ENCODE measurements at regions of chr7 and their contacts with region 1.

Region 1: DNA sequence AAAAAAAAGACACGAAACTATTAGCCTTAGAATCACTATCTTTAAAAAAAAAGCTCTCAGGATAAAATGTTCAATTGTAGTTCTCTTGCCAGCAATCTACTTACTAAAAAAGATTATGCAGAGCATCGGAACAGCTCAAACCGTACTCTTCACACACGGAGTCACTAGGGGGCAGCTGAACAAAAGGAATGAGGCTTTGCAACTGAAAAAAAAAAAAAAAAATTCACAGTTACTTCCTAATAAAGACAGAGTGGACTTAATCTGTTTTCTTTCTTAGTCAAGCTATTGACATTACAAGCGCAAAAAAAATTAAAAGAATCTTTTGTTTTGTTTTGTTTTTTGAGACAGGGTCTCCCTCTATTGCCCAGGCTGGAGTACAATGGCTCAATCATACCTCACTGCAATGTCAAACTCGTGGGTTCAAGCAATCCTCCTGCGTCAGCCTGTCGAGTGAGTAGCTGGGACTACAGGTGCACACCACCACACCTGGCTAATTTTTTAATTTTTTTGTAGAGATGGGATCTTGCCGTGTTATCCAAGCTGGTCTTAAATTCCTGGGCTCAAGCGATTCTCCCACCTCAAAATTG is 11.5 kb downstream of the PMS2 start:
- DNase-seq: peak; percentile 62
- H3K4me3 Mint-ChIP-seq: no peak overlapping the region
- H3K27ac Mint-ChIP-seq: no peak overlapping the region
- H3K4me1 Mint-ChIP-seq: peaks cover 11% of the 10 kb centered on the region
- H3K27me3 Mint-ChIP-seq: no peaks in the 10 kb centered on the region
- CTCF ChIP-seq: peak; percentile 51

Region 2: DNA sequence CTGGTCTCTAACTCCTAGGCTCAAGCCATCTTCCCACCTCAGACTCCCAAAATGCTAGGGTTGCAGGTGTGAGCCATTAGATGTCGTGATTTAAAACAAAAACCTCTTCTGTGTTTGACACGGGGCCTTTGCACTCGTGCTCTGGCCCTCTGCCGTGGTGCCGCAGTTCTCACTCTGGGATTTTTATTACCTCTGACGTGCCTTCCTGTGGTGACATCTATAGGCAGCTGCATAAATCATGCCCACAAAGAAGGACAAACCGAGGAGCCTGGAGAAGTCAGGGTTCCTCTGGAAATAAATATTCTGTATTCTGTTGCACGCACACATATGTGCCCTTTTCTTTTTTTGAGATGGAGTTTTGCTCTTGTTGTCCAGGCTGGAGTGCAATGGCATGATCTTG is 142.6 kb before region 1 on chr7:
- CTCF ChIA-PET with region 1: interaction called, 4 read pairs
- POLR2A ChIA-PET with region 1: interaction called, 4 read pairs
- intact Hi-C with region 1: loop called (anchors 10 kb)
- DNase-seq: no peak
- H3K4me3 Mint-ChIP-seq: no peak overlapping the region
- H3K27ac Mint-ChIP-seq: no peak overlapping the region
- H3K4me1 Mint-ChIP-seq: no peaks in the 10 kb centered on the region
- H3K27me3 Mint-ChIP-seq: no peaks in the 10 kb centered on the region
- CTCF ChIP-seq: no peak

Region 3: DNA sequence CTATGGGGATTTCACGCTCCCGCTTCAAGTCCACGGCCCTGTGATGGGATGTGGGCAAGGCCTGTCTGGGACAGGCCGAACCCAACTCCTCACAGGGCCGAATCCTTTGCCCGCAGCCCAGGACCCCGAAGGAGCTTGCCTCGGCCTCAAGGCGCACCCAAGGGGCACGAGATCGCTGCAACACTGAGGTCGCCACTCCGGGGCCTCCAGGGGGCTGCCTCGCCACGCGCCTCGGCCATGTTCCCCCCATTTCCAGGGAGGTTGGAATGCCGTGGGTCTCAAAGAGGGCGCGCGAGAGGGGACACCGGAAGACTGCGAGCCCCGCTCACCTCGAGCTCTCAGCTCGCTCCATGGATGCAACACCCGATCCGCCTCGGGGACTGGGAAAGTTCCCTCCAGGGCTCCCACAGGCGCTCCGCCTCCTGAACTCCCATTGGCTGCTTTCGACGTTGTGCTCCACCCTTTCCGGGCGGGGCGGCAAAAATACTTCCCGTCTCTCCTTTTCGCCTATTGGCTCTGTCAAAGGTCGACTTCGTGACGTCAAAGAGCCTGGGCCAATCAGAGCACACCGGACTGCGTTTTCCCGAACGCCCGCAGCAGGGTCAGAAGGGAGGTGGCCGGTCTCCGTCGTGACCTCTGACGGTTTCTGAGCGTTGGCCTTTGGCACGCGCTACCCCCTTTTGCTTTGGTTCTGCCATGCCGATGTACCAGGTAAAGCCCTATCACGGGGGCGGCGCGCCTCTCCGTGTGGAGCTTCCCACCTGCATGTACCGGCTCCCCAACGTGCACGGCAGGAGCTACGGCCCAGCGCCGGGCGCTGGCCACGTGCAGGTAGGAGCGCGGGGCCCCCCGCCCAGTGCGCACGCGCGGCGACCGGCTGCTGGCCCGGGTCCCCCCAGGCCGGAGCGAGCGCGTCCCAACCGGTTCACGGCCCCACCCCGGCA is 11.6 kb after region 1 on chr7 and contains the starts of genes AIMP2 and PMS2:
- CTCF ChIA-PET with region 1: interaction called, 9 read pairs
- POLR2A ChIA-PET with region 1: interaction called, 38 read pairs
- intact Hi-C with region 1: no loop called
- DNase-seq: peak; percentile 99
- H3K4me3 Mint-ChIP-seq: peak within 1 kb of the TSS; percentile 83
- H3K27ac Mint-ChIP-seq: peak within 1 kb of the TSS; percentile 88
- H3K4me1 Mint-ChIP-seq: peaks cover 33% of the 10 kb centered on the region
- H3K27me3 Mint-ChIP-seq: no peaks in the 10 kb centered on the region
- CTCF ChIP-seq: no peak
- total RNA-seq, gene AIMP2: 72.6 and 113 TPM in 2 replicates
- total RNA-seq, gene PMS2: 18.9 and 20.5 TPM in 2 replicates

Region 4: DNA sequence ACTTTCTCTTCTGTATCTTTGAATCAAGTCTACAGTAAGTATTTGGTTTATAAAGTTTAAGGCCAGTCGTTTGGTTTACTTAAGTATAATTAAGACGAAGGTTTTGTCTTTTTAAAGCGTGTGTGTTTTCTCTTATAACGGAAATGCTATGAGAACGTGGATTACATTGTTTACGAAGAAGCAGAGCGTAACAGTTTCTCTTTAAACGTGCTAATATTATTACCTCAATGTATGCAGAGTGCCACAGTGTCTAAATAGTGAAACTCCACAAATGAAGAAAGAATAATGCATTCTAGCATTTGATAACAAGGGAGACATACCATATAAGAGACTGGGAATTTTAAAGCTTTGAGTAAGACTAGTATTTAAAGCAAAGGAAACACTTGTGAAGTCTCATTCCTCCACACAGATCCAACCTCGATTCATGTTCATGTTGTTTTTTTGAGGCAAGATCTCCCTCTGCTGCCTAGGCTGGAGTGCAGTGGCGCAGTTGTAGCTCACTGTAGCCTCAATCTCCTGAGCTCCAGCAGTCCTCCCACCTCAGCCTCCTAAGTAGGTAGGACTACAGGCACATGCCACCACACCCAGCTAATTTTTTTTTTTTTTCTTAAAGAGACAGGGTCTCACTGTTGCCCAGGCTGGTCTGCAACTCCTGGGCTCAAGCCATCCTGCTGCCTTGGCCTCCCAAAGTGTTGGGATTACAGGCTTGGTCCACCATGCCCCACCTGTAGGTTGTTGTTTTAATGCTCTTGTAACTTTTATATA is 109.0 kb after region 1 on chr7:
- CTCF ChIA-PET with region 1: interaction called, 20 read pairs
- POLR2A ChIA-PET with region 1: interaction called, 11 read pairs
- intact Hi-C with region 1: loop called (anchors 1 kb)
- DNase-seq: peak; percentile 67
- H3K4me3 Mint-ChIP-seq: peak overlapping the region; percentile 77
- H3K27ac Mint-ChIP-seq: peak overlapping the region; percentile 61
- H3K4me1 Mint-ChIP-seq: peaks cover 11% of the 10 kb centered on the region
- H3K27me3 Mint-ChIP-seq: no peaks in the 10 kb centered on the region
- CTCF ChIP-seq: no peak

Region 5: DNA sequence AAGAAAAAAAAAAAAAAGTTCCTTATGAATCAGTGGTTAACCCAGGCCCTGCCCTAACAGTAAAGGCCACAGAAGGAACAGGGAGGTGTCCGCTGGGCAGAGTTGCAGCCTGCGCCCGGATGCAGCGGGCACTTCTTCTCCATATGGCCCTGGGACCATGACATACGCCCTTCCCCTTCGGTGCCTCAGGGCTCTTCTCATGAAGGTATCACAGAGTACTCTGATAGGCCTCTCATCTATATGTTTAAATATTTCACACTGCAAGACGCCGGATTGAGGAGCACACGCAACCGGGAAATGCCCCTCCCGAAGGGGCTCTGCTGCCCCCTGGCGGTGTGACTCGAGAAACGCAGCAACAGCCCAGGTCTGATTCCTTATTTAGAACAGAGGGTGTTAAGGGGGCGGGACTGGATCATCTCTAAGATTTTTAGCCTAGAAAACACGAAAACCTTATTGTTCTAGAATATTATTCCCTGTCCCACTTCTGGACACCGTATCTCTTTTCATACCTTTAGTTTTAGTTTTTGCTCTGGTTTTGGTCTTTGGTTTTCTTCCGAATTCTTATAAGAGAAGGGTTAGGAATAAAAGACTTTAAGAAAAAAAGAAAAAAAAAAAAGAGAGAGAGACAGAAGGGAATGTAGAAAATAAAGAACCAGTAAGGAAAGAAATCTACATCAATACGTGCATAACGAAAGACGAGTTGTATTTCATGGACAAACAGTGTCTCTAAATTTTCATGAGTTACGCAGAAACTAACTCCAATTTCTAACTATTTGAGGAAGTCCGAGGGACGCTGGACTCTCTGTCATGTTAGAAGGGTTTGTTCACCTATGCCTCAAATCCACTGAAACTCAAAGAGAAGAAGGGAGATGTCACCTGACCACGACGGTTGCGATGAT is 438.4 kb after region 1 on chr7:
- CTCF ChIA-PET with region 1: interaction called, 5 read pairs
- POLR2A ChIA-PET with region 1: no interaction called
- intact Hi-C with region 1: loop called (anchors 10 kb)
- DNase-seq: peak; percentile 81
- H3K4me3 Mint-ChIP-seq: no peak overlapping the region
- H3K27ac Mint-ChIP-seq: no peak overlapping the region
- H3K4me1 Mint-ChIP-seq: peaks cover 6% of the 10 kb centered on the region
- H3K27me3 Mint-ChIP-seq: no peaks in the 10 kb centered on the region
- CTCF ChIP-seq: peak; percentile 96

Measured in MCF 10A (cell line).